IMR-90 (cell line): ENCODE measurements at regions of chr12 and their contacts with region 1.

Region 1: GRCh38 chr12:42589465-42590329 is at the start of gene PRICKLE1:
- DNase-seq: peak; percentile 60
- ATAC-seq: peak; percentile 88
- H3K4me3 ChIP-seq: peak within 1 kb of the TSS; percentile 89
- H3K27ac ChIP-seq: peak within 1 kb of the TSS; percentile 58
- H3K4me1 ChIP-seq: peaks cover 17% of the 10 kb centered on the region
- H3K27me3 ChIP-seq: peaks cover 14% of the 10 kb centered on the region
- CTCF ChIP-seq: no peak
- POLR2A ChIP-seq: no peak
- RAD21 ChIP-seq: no peak; the same call in 1 of the 2 replicates
- total RNA-seq, gene PRICKLE1: 20.8 and 21.3 TPM in 2 replicates

Region 2: GRCh38 chr12:42809226-42809625 is 219.5 kb after region 1 on chr12:
- CTCF ChIA-PET with region 1: no interaction called
- POLR2A ChIA-PET with region 1: no interaction called
- dilution Hi-C with region 1: no loop called
- in situ Hi-C with region 1: no loop called
- intact Hi-C with region 1: loop called (anchors 10 kb)
- DNase-seq: peak; percentile 48
- ATAC-seq: peak; percentile 72
- H3K4me3 ChIP-seq: no peak overlapping the region
- H3K27ac ChIP-seq: no peak overlapping the region
- H3K4me1 ChIP-seq: peaks cover 4% of the 10 kb centered on the region
- H3K27me3 ChIP-seq: no peaks in the 10 kb centered on the region
- CTCF ChIP-seq: no peak
- POLR2A ChIP-seq: no peak
- RAD21 ChIP-seq: no peak

Region 3: GRCh38 chr12:43029971-43030370 is 440.3 kb after region 1 on chr12:
- CTCF ChIA-PET with region 1: no interaction called
- POLR2A ChIA-PET with region 1: no interaction called
- dilution Hi-C with region 1: no loop called
- in situ Hi-C with region 1: no loop called
- intact Hi-C with region 1: loop called (anchors 10 kb)
- DNase-seq: peak; percentile 45
- ATAC-seq: no peak
- H3K4me3 ChIP-seq: no peak overlapping the region
- H3K27ac ChIP-seq: no peak overlapping the region
- H3K4me1 ChIP-seq: peaks cover 4% of the 10 kb centered on the region
- H3K27me3 ChIP-seq: no peaks in the 10 kb centered on the region
- CTCF ChIP-seq: no peak
- POLR2A ChIP-seq: no peak
- RAD21 ChIP-seq: no peak